Activated CD8-positive, alpha-beta T cell treated with anti-CD3 and anti-CD28 coated beads, Interleukin-2, amount 10 ng/mL, durations not matched to agents 7 days and 5 days (primary cell): ENCODE measurements at regions of chr7 and their contacts with region 1.

Region 1: DNA sequence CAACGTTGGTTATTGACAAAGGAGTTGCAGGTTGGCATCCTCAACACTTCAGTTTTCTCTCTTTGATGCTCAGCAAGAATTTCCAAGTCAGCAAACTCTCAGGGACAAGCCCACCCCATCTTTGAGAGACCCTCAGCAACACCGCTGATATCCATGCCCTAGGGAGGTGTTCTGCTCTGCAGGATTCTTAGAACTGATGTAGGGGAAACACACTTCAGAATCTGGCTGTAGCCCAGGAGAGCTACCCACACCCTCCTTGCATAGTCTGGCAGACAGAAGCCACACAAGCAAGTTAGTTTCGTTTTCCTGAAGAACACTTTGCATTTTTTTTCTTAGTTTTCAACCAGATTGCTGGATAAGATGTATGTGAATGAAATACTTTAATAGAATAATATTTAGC is 822 bp downstream of the SAMD9L start:
- DNase-seq: peak; percentile 58
- ATAC-seq: peak; percentile 93
- H3K4me3 Mint-ChIP-seq: peak overlapping the region; percentile 98
- H3K27ac Mint-ChIP-seq: peak overlapping the region; percentile 88
- H3K4me1 Mint-ChIP-seq: peaks cover 33% of the 10 kb centered on the region
- H3K27me3 Mint-ChIP-seq: no peaks in the 10 kb centered on the region

Region 2: DNA sequence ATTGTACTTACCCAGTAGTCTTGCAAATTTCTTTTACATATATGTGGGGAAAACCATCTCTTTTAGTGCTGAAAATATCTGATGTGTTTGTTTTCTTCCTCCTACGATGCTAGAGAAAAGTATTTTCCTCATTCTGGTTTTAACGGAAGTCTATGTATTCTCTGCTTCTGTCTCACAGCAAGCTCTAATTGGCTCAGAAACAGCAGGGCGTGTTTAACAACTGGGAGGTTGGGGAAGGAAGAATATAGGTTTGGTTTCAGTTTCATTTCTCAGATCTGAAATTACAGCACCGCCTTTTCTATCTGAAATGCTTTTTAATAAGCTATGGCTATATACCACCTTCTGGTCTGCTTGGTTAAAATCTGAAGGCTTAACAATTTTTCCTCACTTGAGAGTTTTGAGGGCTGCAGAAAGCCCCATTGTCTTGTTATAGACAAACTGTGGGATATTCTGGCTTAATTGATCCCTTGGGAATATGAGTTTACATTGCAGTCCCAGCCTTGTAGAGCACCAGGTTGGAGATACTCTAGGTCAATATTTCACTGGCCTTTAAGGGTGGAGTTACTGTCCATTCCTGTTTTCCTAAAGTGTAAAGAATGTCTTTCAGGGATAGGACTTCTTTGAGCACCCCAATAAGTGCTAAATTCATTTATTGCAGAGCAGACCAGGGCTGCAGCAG is 29.4 kb before region 1 on chr7 and contains the start of gene SAMD9:
- CTCF ChIA-PET with region 1: interaction called, 11 read pairs
- POLR2A ChIA-PET with region 1: interaction called, 21 read pairs
- DNase-seq: peak; percentile 80
- ATAC-seq: peak; percentile 98
- H3K4me3 Mint-ChIP-seq: peak within 1 kb of the TSS; percentile 88
- H3K27ac Mint-ChIP-seq: peak within 1 kb of the TSS; percentile 89
- H3K4me1 Mint-ChIP-seq: peaks cover 43% of the 10 kb centered on the region
- H3K27me3 Mint-ChIP-seq: no peaks in the 10 kb centered on the region
- total RNA-seq, gene SAMD9: 49.0 to 51.0 TPM

Region 3: DNA sequence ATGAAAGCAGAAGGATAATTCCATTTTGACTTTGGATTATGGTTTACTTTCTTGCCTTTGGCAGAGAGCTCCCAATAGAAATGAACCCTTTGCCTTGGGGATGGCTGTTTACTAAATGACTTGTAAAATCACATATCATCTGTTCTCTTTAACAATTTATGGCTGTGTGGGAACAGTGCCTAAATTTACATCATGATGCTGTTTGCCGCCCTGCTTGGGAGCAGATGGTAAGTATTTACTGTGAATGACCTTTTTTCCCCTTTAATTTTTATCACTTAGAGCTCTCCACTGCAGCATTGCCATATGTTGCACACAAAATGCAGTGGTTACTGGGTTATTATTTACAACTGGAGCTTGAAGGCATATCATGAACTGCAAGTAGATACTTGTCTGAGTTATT is 65.5 kb after region 1 on chr7:
- CTCF ChIA-PET with region 1: no interaction called
- POLR2A ChIA-PET with region 1: no interaction called
- DNase-seq: no peak
- ATAC-seq: no peak
- H3K4me3 Mint-ChIP-seq: no peak overlapping the region
- H3K27ac Mint-ChIP-seq: no peak overlapping the region
- H3K4me1 Mint-ChIP-seq: no peaks in the 10 kb centered on the region
- H3K27me3 Mint-ChIP-seq: peaks cover 46% of the 10 kb centered on the region